GM13977 (cell line): ENCODE measurements at regions of chr7 and their contacts with region 1.

Region 1: DNA sequence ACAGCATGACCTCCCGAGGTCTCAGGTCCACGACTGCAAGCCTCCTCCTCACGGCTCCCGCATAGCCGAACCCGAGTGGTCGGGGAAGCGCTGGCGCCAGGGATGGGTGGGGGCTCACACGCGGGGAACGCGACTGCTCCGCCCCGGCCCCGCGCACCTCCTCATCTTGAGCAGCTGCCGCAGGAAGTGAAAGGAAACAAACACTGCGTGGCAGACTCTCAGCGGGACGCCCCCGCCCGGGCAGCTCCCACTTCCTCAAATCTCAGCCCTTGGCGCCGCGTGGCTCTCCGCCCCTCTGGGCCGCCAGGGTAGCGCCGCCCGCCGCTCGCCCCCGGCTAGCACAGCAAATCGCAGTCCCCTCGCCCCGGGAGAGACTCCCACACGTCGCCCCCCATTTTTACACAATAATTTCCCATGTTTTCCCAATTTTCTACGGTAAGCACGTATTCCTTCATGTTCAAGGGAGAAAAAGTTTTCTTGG is at the start of gene TMEM243:
- DNase-seq: peak; percentile 89
- CTCF ChIP-seq: peak; percentile 50

Region 2: DNA sequence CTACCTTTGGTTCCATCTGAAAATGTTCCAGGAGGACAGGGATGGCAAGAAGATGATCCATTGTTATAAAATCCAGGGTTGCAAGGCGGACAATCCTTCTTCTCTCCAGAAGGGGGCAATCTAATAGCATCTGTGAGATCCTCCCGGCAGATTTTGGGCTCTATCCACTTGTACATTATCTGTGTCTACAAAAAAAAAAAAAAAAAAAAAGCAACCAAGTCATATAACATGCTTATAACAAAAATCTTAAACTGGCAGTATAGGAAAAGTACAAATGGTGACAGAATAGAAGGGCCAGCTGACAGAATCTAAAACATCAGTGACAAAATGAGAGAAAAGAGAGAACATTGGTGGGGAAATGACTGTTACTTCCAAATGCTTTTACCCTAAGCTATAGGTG is 292.9 kb before region 1 on chr7:
- in situ Hi-C with region 1: loop called (anchors 10 kb)
- DNase-seq: peak; percentile 12
- CTCF ChIP-seq: peak; percentile 70

Region 3: GRCh38 chr7:87316846-87317545 is 97.4 kb after region 1 on chr7:
- in situ Hi-C with region 1: no loop called
- DNase-seq: no peak
- CTCF ChIP-seq: no peak